ENCODE measurements at regions of chr10 and their contacts with region 1.

Region 1: DNA sequence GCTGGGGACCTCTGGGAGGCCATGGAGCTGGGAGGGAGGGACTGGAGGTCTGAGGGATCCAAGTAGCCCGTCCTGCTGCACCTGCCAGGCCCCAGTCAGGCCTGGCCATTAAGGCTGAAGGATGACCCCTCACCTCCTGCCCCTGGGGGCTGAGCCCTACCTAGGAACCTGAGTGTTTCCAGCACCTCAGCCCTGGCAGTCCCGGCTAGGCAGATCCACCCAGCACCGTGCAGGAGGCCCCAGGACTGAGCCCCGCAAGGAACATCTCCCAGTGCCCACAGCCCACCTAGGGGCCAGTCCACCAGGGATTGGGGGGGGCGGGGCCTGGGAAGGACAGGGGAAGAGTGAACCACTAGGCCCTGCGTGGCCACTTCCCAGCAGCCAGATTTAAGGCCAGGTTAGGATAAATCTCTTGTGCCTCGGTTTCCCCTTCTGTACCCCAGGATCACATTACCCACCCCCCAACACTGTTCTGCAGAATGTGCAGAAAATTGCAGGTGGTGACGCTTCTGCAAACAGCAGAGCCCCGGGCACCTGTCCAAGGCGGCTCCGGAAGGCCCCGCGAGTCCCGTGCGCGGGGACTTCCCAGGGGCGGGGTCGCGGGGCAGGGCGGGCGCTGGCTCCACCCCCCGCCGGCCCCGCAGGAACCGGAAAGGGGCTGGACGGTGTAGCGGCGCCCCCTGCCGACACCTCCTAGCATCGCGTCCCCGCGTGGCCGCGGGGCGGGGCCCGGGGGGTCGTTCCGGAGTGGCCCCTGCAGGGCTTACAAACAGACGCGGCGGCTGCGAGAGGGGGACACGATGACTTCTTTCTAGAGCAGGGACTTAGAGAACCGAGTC is 55.9 kb downstream of the PWWP2B start:
- DNase-seq: peak; percentile 86 to 96 (median 94)
- ATAC-seq: peak; percentile 92
- H3K4me3 ChIP-seq: peak overlapping the region in 1 of 2 experiments; percentile 20
- H3K4me3 Mint-ChIP-seq: peak overlapping the region; percentile 42
- H3K27ac ChIP-seq: peak overlapping the region; percentile 65 to 79
- H3K27ac Mint-ChIP-seq: peak overlapping the region; percentile 89
- H3K4me1 ChIP-seq: peaks cover 35% of the 10 kb centered on the region
- H3K4me1 Mint-ChIP-seq: peaks cover 29% of the 10 kb centered on the region
- H3K27me3 ChIP-seq: no peaks in the 10 kb centered on the region
- H3K27me3 Mint-ChIP-seq: no peaks in the 10 kb centered on the region
- CTCF ChIP-seq: peak; percentile 88

Region 2: GRCh38 chr10:132163278-132163765 is 289.5 kb before region 1 on chr10:
- CTCF ChIA-PET with region 1: no interaction called
- POLR2A ChIA-PET with region 1: no interaction called
- intact Hi-C with region 1: loop called (anchors 5 to 10 kb)
- DNase-seq: peak in 6 of 9 experiments; percentile 24 to 63 (median 44)
- ATAC-seq: peak; percentile 45
- H3K4me3 ChIP-seq: no peak overlapping the region
- H3K4me3 Mint-ChIP-seq: no peak overlapping the region
- H3K27ac ChIP-seq: no peak overlapping the region
- H3K27ac Mint-ChIP-seq: no peak overlapping the region
- H3K4me1 ChIP-seq: peaks cover 32% of the 10 kb centered on the region
- H3K4me1 Mint-ChIP-seq: peaks cover 22% of the 10 kb centered on the region
- H3K27me3 ChIP-seq: no peaks in the 10 kb centered on the region
- H3K27me3 Mint-ChIP-seq: peaks cover 3% of the 10 kb centered on the region
- CTCF ChIP-seq: no peak

Region 3: GRCh38 chr10:132223156-132223590 is 229.7 kb before region 1 on chr10:
- CTCF ChIA-PET with region 1: interaction called, 5 read pairs
- POLR2A ChIA-PET with region 1: no interaction called
- intact Hi-C with region 1: loop called (anchors 1 kb)
- DNase-seq: peak; percentile 21 to 73 (median 61)
- ATAC-seq: peak; percentile 91
- H3K4me3 ChIP-seq: no peak overlapping the region
- H3K4me3 Mint-ChIP-seq: no peak overlapping the region
- H3K27ac ChIP-seq: no peak overlapping the region
- H3K27ac Mint-ChIP-seq: no peak overlapping the region
- H3K4me1 ChIP-seq: no peaks in the 10 kb centered on the region
- H3K4me1 Mint-ChIP-seq: peaks cover 1% of the 10 kb centered on the region
- H3K27me3 ChIP-seq: no peaks in the 10 kb centered on the region
- H3K27me3 Mint-ChIP-seq: no peaks in the 10 kb centered on the region
- CTCF ChIP-seq: peak; percentile 46

Region 4: DNA sequence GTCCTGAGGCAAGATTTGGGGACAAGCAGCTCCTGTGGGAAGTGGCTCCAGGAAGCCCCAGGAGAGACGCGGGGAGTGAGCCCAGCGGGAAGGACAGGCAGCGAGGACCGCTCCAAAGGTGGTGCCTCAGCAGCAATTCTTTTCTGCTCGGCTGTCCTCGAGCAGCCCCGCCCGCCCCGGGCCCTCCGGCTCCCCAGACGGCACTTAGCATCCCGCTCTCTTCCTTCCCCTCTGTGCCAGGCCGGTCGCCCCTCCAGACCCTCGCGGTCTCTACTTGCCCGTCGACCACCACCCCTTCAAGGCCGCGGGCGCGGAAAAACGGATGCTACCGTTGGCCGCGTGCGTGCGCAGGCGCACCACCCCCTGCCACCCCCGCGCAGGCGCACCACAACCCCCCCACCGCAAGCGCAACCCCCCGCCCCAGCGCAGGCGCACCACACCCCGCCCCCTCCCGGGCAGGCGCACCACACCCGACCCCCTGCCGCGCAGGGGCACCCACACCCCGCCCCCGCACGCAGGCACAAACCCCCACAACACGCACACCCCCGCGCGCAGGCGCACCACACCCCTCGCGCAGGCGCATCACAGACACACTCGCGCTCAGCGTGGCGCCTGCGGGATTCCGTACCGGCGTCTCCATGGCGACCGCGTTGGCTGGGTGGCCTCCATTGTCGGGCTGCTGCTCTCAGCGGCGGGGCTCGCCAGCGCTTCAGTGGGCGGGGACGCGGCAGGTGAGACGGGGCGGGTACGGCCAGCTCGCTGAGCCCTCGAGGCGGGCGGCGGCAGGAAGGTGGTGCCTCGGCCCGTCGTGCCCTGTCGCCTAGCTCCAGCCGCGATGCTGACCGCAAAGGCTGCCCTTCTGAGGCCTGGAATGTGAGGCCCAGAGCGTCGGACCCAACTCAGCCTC is 121.1 kb before region 1 on chr10 and contains the start of gene LRRC27:
- CTCF ChIA-PET with region 1: no interaction called
- POLR2A ChIA-PET with region 1: no interaction called
- intact Hi-C with region 1: loop called (anchors 1 to 2 kb)
- DNase-seq: peak; percentile 99 to 100 (median 100)
- ATAC-seq: peak; percentile 90
- H3K4me3 ChIP-seq: peak within 1 kb of the TSS; percentile 77 to 90
- H3K4me3 Mint-ChIP-seq: peak within 1 kb of the TSS; percentile 84
- H3K27ac ChIP-seq: peak within 1 kb of the TSS; percentile 68 to 83
- H3K27ac Mint-ChIP-seq: peak within 1 kb of the TSS; percentile 91
- H3K4me1 ChIP-seq: peaks cover 31% of the 10 kb centered on the region
- H3K4me1 Mint-ChIP-seq: peaks cover 58% of the 10 kb centered on the region
- H3K27me3 ChIP-seq: no peaks in the 10 kb centered on the region
- H3K27me3 Mint-ChIP-seq: no peaks in the 10 kb centered on the region
- CTCF ChIP-seq: no peak
- total RNA-seq, gene LRRC27: 0.68 to 3.2 TPM

Region 5: DNA sequence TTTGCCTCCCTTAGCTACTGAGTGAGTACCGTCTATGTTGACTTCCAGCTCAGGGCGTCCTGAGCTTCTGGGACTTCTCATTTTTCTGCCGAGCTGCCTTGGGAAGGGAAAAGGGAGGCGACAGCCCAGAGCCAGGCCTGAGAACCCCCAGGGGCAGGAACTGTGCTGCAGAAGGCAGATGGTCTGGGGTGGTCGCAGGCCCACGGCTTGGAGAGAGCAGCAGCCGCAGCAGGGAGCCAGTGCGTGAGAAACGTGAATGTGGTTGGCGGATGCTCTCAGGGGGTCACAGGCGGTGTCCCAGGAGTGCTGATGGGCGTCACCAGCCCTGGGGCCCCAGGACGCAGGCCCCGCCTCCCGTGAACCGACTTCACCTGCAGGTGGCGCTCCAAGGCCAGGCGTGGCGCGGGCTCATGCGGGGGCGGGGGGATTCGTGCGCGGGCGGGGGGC is 65.1 kb before region 1 on chr10:
- CTCF ChIA-PET with region 1: interaction called, 13 read pairs
- POLR2A ChIA-PET with region 1: interaction called, 3 read pairs
- intact Hi-C with region 1: loop called (anchors 1 kb)
- DNase-seq: peak; percentile 66 to 89 (median 81)
- ATAC-seq: peak; percentile 94
- H3K4me3 ChIP-seq: peak overlapping the region in 1 of 2 experiments; percentile 18
- H3K4me3 Mint-ChIP-seq: peak overlapping the region; percentile 71
- H3K27ac ChIP-seq: no peak overlapping the region
- H3K27ac Mint-ChIP-seq: peak overlapping the region; percentile 64
- H3K4me1 ChIP-seq: peaks cover 5% of the 10 kb centered on the region
- H3K4me1 Mint-ChIP-seq: peaks cover 3% of the 10 kb centered on the region
- H3K27me3 ChIP-seq: no peaks in the 10 kb centered on the region
- H3K27me3 Mint-ChIP-seq: no peaks in the 10 kb centered on the region
- CTCF ChIP-seq: peak; percentile 44

Region 6: GRCh38 chr10:132396495-132397035 is 56.3 kb before region 1 on chr10:
- CTCF ChIA-PET with region 1: interaction called, 3 read pairs
- POLR2A ChIA-PET with region 1: interaction called, 12 read pairs
- intact Hi-C with region 1: loop called in 1 of 2 experiments (anchors 2 kb)
- DNase-seq: peak in 8 of 9 experiments; percentile 49 to 87 (median 66)
- ATAC-seq: peak; percentile 72
- H3K4me3 ChIP-seq: peak overlapping the region; percentile 30 to 34
- H3K4me3 Mint-ChIP-seq: no peak overlapping the region
- H3K27ac ChIP-seq: peak overlapping the region; percentile 37 to 57
- H3K27ac Mint-ChIP-seq: no peak overlapping the region
- H3K4me1 ChIP-seq: peaks cover 12% of the 10 kb centered on the region
- H3K4me1 Mint-ChIP-seq: peaks cover 22% of the 10 kb centered on the region
- H3K27me3 ChIP-seq: no peaks in the 10 kb centered on the region
- H3K27me3 Mint-ChIP-seq: no peaks in the 10 kb centered on the region
- CTCF ChIP-seq: peak; percentile 17

Region 7: DNA sequence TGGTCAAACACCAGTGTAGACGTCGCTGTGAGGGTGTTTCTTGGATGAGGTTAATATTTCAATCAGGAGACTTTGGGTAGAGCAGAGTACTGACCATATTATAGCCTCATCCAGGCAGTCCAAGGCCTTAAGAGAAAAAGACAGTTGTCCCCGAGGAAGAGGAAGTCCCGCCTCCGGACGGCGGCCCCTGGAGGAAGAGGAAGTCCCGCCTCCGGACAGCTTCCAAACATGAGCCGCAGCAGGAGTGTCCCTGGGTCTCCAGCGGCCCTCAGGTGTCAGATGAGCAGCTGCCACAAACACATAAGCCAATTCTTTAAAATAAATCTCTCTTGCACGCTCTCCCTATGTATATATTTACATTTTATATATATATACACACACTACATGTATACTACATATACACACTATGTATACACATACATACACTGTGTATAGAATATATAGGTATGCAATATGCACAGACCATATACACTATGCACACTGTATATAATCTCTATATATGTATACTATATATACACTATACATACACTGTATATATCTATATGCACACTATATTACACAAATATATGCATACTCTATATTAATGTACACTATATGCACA is 18.3 kb before region 1 on chr10:
- CTCF ChIA-PET with region 1: interaction called, 3 read pairs
- POLR2A ChIA-PET with region 1: no interaction called
- intact Hi-C with region 1: loop called in 1 of 2 experiments (anchors 1 kb)
- DNase-seq: peak in 8 of 9 experiments; percentile 42 to 73 (median 56)
- ATAC-seq: peak; percentile 58
- H3K4me3 ChIP-seq: peak overlapping the region in 1 of 2 experiments; percentile 27
- H3K4me3 Mint-ChIP-seq: peak overlapping the region; percentile 55
- H3K27ac ChIP-seq: peak overlapping the region in 1 of 2 experiments; percentile 43
- H3K27ac Mint-ChIP-seq: peak overlapping the region; percentile 55
- H3K4me1 ChIP-seq: peaks cover 8% of the 10 kb centered on the region
- H3K4me1 Mint-ChIP-seq: peaks cover 7% of the 10 kb centered on the region
- H3K27me3 ChIP-seq: no peaks in the 10 kb centered on the region
- H3K27me3 Mint-ChIP-seq: no peaks in the 10 kb centered on the region
- CTCF ChIP-seq: no peak